ENCODE measurements at regions of chrX and their contacts with region 1.

Region 1: GRCh38 chrX:18984381-18985185 is 669 bp upstream of the PHKA2 start:
- DNase-seq: peak; percentile 90
- ATAC-seq: peak; percentile 86
- H3K4me3 ChIP-seq: peak overlapping the region; percentile 56 to 77 (median 70)
- H3K4me3 Mint-ChIP-seq: peak overlapping the region; percentile 89
- H3K27ac ChIP-seq: peak overlapping the region; percentile 88 to 91
- H3K27ac Mint-ChIP-seq: peak overlapping the region; percentile 94
- H3K4me1 ChIP-seq: peaks cover 11 to 14% of the 10 kb centered on the region in 2 donors
- H3K4me1 Mint-ChIP-seq: peaks cover 18% of the 10 kb centered on the region
- H3K27me3 ChIP-seq: no peaks in the 10 kb centered on the region
- H3K27me3 Mint-ChIP-seq: no peaks in the 10 kb centered on the region
- CTCF ChIP-seq: peak; percentile 50

Region 2: DNA sequence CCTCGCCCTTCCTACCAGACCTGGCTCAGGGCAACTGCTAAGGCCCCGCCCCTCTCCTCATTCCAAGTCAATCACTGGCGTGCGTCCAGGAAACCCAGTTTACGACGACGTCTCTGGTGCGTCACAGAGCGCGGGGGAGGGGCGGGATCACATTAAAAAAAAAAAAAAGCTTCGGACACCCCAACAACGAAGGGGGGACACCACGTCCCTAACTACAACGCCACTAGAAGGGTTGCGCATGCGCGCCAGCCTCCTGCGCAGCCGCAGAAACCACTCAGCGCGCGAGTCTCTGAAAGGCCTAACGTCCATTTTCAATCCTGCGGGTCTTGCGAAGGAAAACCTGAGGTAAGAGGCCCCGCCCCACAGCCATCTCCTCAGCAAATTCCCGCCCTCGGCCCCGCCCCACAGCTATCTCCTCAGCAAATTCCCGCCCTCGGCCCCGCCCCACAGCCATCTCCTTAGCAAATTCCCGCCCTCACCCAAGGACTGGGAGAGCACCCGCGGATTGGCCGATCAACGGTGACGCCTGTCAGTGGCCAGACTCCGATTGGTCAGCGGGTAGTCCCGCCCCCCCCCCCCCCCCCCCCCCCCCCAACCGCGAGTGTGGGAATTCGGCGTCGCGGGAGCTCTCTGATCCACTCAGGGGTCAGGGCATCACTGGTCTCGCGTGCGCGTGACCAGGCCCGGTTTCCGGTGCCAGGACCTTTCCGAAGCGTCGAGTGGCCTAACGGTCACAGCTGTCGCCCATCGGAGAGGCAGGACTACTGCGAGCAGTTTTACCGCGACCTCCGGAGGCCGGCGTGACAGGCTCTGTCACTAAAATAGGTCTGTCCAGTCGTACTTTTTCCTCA is 1247.5 kb before region 1 on chrX and contains the start of gene SCML1:
- CTCF ChIA-PET with region 1: no interaction called
- POLR2A ChIA-PET with region 1: interaction called, 3 read pairs
- intact Hi-C with region 1: loop called (anchors 5 kb)
- DNase-seq: peak; percentile 90
- ATAC-seq: peak; percentile 88
- H3K4me3 ChIP-seq: peak within 1 kb of the TSS; percentile 45 to 73 (median 65)
- H3K4me3 Mint-ChIP-seq: peak within 1 kb of the TSS; percentile 90
- H3K27ac ChIP-seq: peak within 1 kb of the TSS; percentile 75 to 81
- H3K27ac Mint-ChIP-seq: peak within 1 kb of the TSS; percentile 85
- H3K4me1 ChIP-seq: peaks cover 6 to 12% of the 10 kb centered on the region in 2 donors
- H3K4me1 Mint-ChIP-seq: peaks cover 16% of the 10 kb centered on the region
- H3K27me3 ChIP-seq: no peaks in the 10 kb centered on the region
- H3K27me3 Mint-ChIP-seq: peaks cover 6% of the 10 kb centered on the region
- CTCF ChIP-seq: no peak
- total RNA-seq, gene SCML1: 6.7 and 8.3 TPM in 2 replicates

Region 3: GRCh38 chrX:18886344-18887161 is 98.0 kb before region 1 on chrX:
- CTCF ChIA-PET with region 1: no interaction called
- POLR2A ChIA-PET with region 1: interaction called, 8 read pairs
- intact Hi-C with region 1: loop called (anchors 2 kb)
- DNase-seq: peak; percentile 69
- ATAC-seq: peak; percentile 83
- H3K4me3 ChIP-seq: peak overlapping the region; percentile 49 to 65 (median 58)
- H3K4me3 Mint-ChIP-seq: peak overlapping the region; percentile 95
- H3K27ac ChIP-seq: peak overlapping the region; percentile 59 to 75
- H3K27ac Mint-ChIP-seq: peak overlapping the region; percentile 97
- H3K4me1 ChIP-seq: peaks cover 14 to 20% of the 10 kb centered on the region in 2 donors
- H3K4me1 Mint-ChIP-seq: peaks cover 24% of the 10 kb centered on the region
- H3K27me3 ChIP-seq: no peaks in the 10 kb centered on the region
- H3K27me3 Mint-ChIP-seq: no peaks in the 10 kb centered on the region
- CTCF ChIP-seq: peak; percentile 60

Region 4: GRCh38 chrX:19334945-19335626 is 350.5 kb after region 1 on chrX:
- CTCF ChIA-PET with region 1: no interaction called
- POLR2A ChIA-PET with region 1: no interaction called
- intact Hi-C with region 1: loop called (anchors 2 kb)
- DNase-seq: peak; percentile 27
- ATAC-seq: no peak
- H3K4me3 ChIP-seq: no peak overlapping the region
- H3K4me3 Mint-ChIP-seq: no peak overlapping the region
- H3K27ac ChIP-seq: no peak overlapping the region
- H3K27ac Mint-ChIP-seq: no peak overlapping the region
- H3K4me1 ChIP-seq: no peaks in the 10 kb centered on the region
- H3K4me1 Mint-ChIP-seq: no peaks in the 10 kb centered on the region
- H3K27me3 ChIP-seq: no peaks in the 10 kb centered on the region
- H3K27me3 Mint-ChIP-seq: no peaks in the 10 kb centered on the region
- CTCF ChIP-seq: peak; percentile 2

Region 5: GRCh38 chrX:19343535-19344408 is 359.2 kb after region 1 on chrX and contains the start of gene PDHA1:
- CTCF ChIA-PET with region 1: no interaction called
- POLR2A ChIA-PET with region 1: no interaction called
- intact Hi-C with region 1: loop called (anchors 1 kb)
- DNase-seq: peak; percentile 93
- ATAC-seq: peak; percentile 98
- H3K4me3 ChIP-seq: peak within 1 kb of the TSS; percentile 31 to 76 (median 63)
- H3K4me3 Mint-ChIP-seq: peak within 1 kb of the TSS; percentile 92
- H3K27ac ChIP-seq: peak within 1 kb of the TSS; percentile 59 to 94
- H3K27ac Mint-ChIP-seq: peak within 1 kb of the TSS; percentile 90
- H3K4me1 ChIP-seq: peaks cover 8 to 16% of the 10 kb centered on the region in 2 donors
- H3K4me1 Mint-ChIP-seq: peaks cover 17% of the 10 kb centered on the region
- H3K27me3 ChIP-seq: no peaks in the 10 kb centered on the region
- H3K27me3 Mint-ChIP-seq: no peaks in the 10 kb centered on the region
- CTCF ChIP-seq: no peak
- total RNA-seq, gene PDHA1: 106 and 115 TPM in 2 replicates